MCF 10A (cell line): ENCODE measurements at regions of chr11 and their contacts with region 1.

Region 1: DNA sequence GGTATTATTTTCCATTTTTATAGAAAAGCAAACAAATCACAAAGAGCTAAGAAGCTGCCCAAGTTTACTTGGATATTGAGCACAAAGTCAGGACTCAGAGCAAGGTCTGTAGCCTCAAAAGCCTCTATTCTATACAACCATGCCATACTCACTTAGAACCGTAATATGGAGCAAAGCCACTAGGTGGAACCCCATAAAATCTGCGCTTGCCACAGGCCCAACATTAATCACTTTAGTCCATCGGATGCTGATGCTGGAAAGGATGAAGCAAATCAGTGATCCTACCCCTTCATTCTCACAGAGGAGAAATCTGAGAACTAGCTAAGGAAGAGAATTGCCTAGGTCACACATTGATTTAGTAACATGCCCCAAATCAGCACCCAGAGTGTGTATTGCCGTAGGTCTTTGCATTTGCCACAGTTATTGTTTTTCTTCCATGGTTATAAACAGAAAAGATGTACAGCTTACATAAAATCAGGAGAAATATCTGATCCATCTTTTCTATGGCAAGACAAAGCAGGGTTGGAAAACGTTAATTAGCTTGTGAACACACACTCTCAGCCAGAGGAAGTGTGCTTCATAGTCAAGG is 56.7 kb upstream of the RAB38 start:
- DNase-seq: peak; percentile 59
- H3K4me3 Mint-ChIP-seq: no peak overlapping the region
- H3K27ac Mint-ChIP-seq: no peak overlapping the region
- H3K4me1 Mint-ChIP-seq: peaks cover 5% of the 10 kb centered on the region
- H3K27me3 Mint-ChIP-seq: no peaks in the 10 kb centered on the region
- CTCF ChIP-seq: peak; percentile 53

Region 2: DNA sequence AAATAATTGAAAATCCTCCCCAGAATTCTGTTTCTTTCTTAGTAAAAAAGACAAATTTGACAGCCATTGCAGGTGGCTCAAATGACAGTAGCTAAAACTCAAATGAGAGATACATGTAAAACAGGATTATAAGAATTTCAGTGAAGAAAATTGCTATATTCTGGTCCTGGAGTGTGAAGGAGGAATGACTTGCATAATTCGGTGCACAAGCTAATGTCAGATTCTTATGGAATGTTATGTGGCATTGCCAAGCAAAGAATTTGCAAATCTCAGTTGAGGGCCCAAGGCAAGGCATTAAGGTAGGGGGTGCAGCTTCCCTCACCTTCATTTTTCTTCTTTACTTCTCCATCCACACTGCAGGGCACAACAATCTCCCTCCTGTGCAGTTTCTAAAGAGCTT is 92.1 kb before region 1 on chr11:
- CTCF ChIA-PET with region 1: no interaction called
- POLR2A ChIA-PET with region 1: no interaction called
- intact Hi-C with region 1: no loop called
- DNase-seq: no peak
- H3K4me3 Mint-ChIP-seq: no peak overlapping the region
- H3K27ac Mint-ChIP-seq: no peak overlapping the region
- H3K4me1 Mint-ChIP-seq: peaks cover 15% of the 10 kb centered on the region
- H3K27me3 Mint-ChIP-seq: no peaks in the 10 kb centered on the region
- CTCF ChIP-seq: no peak

Region 3: GRCh38 chr11:88174709-88175568 is 57.0 kb before region 1 on chr11 and contains the start of gene RAB38:
- CTCF ChIA-PET with region 1: interaction called, 23 read pairs
- POLR2A ChIA-PET with region 1: interaction called, 5 read pairs
- intact Hi-C with region 1: no loop called
- DNase-seq: peak; percentile 91
- H3K4me3 Mint-ChIP-seq: peak within 1 kb of the TSS; percentile 85
- H3K27ac Mint-ChIP-seq: peak within 1 kb of the TSS; percentile 91
- H3K4me1 Mint-ChIP-seq: peaks cover 40% of the 10 kb centered on the region
- H3K27me3 Mint-ChIP-seq: no peaks in the 10 kb centered on the region
- CTCF ChIP-seq: no peak
- total RNA-seq, gene RAB38: 77.7 and 80.9 TPM in 2 replicates

Region 4: DNA sequence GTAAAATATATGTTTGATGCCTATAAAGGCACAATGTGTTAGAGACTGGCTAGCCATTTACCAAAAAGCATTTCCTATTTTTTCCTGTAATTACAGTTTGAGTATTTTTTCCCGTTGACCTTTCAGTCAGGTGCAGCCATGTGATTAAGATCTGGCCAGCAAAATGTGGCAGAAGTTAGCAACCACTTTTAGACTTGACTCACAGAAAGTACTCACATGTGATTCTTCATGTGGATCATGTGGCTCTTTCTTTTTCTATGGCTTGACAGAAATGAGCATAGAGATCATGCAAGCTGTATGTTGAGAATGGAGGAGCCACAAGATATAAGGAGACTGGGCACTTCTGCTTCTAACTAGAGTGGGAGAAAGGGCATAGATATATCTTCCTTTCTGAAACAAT is 29.5 kb before region 1 on chr11:
- CTCF ChIA-PET with region 1: no interaction called
- POLR2A ChIA-PET with region 1: no interaction called
- intact Hi-C with region 1: no loop called
- DNase-seq: no peak
- H3K4me3 Mint-ChIP-seq: no peak overlapping the region
- H3K27ac Mint-ChIP-seq: no peak overlapping the region
- H3K4me1 Mint-ChIP-seq: peaks cover 6% of the 10 kb centered on the region
- H3K27me3 Mint-ChIP-seq: no peaks in the 10 kb centered on the region
- CTCF ChIP-seq: no peak

Region 5: GRCh38 chr11:88213406-88213805 is 18.6 kb before region 1 on chr11:
- CTCF ChIA-PET with region 1: interaction called, 19 read pairs
- POLR2A ChIA-PET with region 1: no interaction called
- intact Hi-C with region 1: no loop called
- DNase-seq: no peak
- H3K4me3 Mint-ChIP-seq: no peak overlapping the region
- H3K27ac Mint-ChIP-seq: no peak overlapping the region
- H3K4me1 Mint-ChIP-seq: no peaks in the 10 kb centered on the region
- H3K27me3 Mint-ChIP-seq: no peaks in the 10 kb centered on the region
- CTCF ChIP-seq: no peak

Region 6: GRCh38 chr11:88281317-88281712 is 49.3 kb after region 1 on chr11:
- CTCF ChIA-PET with region 1: interaction called, 41 read pairs
- POLR2A ChIA-PET with region 1: no interaction called
- intact Hi-C with region 1: loop called (anchors 5 kb)
- DNase-seq: peak; percentile 33
- H3K4me3 Mint-ChIP-seq: no peak overlapping the region
- H3K27ac Mint-ChIP-seq: no peak overlapping the region
- H3K4me1 Mint-ChIP-seq: peaks cover 7% of the 10 kb centered on the region
- H3K27me3 Mint-ChIP-seq: no peaks in the 10 kb centered on the region
- CTCF ChIP-seq: peak; percentile 28

Region 7: DNA sequence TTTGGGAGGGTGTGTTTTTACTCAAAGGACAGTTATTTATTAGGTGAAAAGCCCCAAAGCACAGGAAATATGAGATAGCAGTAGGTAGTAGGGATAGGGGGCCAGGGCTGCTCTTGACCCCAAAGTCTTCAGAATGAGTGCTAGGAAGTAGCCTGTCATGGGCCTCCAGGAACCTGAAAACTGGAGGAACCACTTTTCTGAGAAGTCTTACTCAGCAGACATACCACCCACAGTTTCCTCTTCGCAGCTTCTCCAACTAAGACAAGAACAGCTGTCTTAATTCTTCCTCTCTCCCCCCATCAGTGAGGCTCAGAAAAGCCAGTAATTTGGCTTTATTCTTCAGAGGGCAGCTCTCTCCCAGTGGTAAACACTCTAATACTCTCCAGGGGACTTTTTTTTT is 189.5 kb after region 1 on chr11:
- CTCF ChIA-PET with region 1: no interaction called
- POLR2A ChIA-PET with region 1: interaction called, 4 read pairs
- intact Hi-C with region 1: loop called (anchors 5 kb)
- DNase-seq: no peak
- H3K4me3 Mint-ChIP-seq: no peak overlapping the region
- H3K27ac Mint-ChIP-seq: peak overlapping the region; percentile 29
- H3K4me1 Mint-ChIP-seq: peaks cover 17% of the 10 kb centered on the region
- H3K27me3 Mint-ChIP-seq: no peaks in the 10 kb centered on the region
- CTCF ChIP-seq: no peak

Region 8: GRCh38 chr11:88535916-88536547 is 304.0 kb after region 1 on chr11:
- CTCF ChIA-PET with region 1: interaction called, 64 read pairs
- POLR2A ChIA-PET with region 1: no interaction called
- intact Hi-C with region 1: no loop called
- DNase-seq: peak; percentile 82
- H3K4me3 Mint-ChIP-seq: no peak overlapping the region
- H3K27ac Mint-ChIP-seq: peak overlapping the region; percentile 0
- H3K4me1 Mint-ChIP-seq: peaks cover 37% of the 10 kb centered on the region
- H3K27me3 Mint-ChIP-seq: no peaks in the 10 kb centered on the region
- CTCF ChIP-seq: no peak

Region 9: DNA sequence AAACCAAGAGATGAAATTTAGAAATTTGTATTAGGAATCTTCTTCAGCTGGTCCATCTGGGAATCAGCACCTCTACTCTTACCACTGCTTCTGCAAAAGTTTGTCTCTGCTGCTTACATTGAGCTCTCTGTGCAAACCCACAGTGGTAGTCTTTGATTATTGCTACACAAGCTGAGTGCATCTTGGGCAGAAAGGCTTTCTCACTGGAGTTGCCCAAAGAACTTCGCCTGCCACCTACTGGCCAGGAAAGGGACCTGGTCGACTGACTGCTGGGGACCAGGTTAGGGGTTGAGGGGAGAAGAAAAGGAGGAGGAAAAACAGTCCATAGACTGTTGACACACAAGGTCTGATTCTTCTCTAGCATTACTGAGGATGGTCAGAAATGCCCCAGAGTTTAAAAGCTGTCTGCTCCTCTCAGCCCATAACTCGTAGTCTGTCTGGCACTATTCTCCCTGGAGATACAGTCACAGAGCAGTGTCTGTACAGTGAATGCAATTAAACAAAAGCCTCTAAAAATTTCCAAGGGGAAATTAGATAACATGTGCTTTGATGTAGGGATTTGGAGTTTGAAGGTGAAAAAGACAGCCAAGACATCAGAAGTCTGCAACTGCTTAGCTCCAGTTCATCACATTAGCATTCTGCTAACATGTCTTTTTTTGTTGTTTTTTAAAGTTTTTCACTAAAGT is 320.5 kb after region 1 on chr11:
- CTCF ChIA-PET with region 1: interaction called, 11 read pairs
- POLR2A ChIA-PET with region 1: no interaction called
- intact Hi-C with region 1: no loop called
- DNase-seq: peak; percentile 74
- H3K4me3 Mint-ChIP-seq: no peak overlapping the region
- H3K27ac Mint-ChIP-seq: no peak overlapping the region
- H3K4me1 Mint-ChIP-seq: peaks cover 11% of the 10 kb centered on the region
- H3K27me3 Mint-ChIP-seq: no peaks in the 10 kb centered on the region
- CTCF ChIP-seq: peak; percentile 37